ENCODE measurements at regions of chr13 and their contacts with region 1.

Region 1: GRCh38 chr13:20197361-20197834 is 4.7 kb upstream of the GJB2 start:
- DNase-seq: peak in 4 of 9 experiments; percentile 24 to 71 (median 46)
- ATAC-seq: peak; percentile 76
- H3K4me3 ChIP-seq: no peak overlapping the region
- H3K4me3 Mint-ChIP-seq: no peak overlapping the region
- H3K27ac ChIP-seq: no peak overlapping the region
- H3K27ac Mint-ChIP-seq: no peak overlapping the region
- H3K4me1 ChIP-seq: peaks cover 16% of the 10 kb centered on the region
- H3K4me1 Mint-ChIP-seq: peaks cover 18% of the 10 kb centered on the region
- H3K27me3 ChIP-seq: peaks cover 21 to 38% of the 10 kb centered on the region in 2 experiments
- H3K27me3 Mint-ChIP-seq: peaks cover 42% of the 10 kb centered on the region
- CTCF ChIP-seq: peak; percentile 78

Region 2: DNA sequence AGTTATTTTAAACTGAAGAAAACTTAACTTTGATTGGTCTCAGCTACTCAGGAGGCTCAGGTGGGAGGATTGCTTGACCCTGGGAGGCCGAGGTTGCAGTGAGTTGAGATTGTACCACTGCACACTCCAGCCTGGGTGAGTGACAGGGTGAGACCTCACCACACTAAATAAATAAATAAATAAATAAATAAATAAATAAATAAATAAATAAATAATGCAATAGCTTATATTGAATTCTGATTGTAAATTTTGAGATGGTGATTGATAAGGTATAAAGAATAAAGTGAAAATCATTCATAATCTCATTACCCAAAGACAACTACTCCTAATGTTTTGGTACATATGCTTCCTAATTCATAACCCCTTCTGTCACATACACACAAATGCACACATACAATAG is 1073.9 kb before region 1 on chr13:
- CTCF ChIA-PET with region 1: no interaction called
- POLR2A ChIA-PET with region 1: no interaction called
- intact Hi-C with region 1: no loop called
- DNase-seq: no peak
- ATAC-seq: no peak
- H3K4me3 ChIP-seq: no peak overlapping the region
- H3K4me3 Mint-ChIP-seq: no peak overlapping the region
- H3K27ac ChIP-seq: no peak overlapping the region
- H3K27ac Mint-ChIP-seq: no peak overlapping the region
- H3K4me1 ChIP-seq: no peaks in the 10 kb centered on the region
- H3K4me1 Mint-ChIP-seq: no peaks in the 10 kb centered on the region
- H3K27me3 ChIP-seq: no peaks in the 10 kb centered on the region
- H3K27me3 Mint-ChIP-seq: no peaks in the 10 kb centered on the region
- CTCF ChIP-seq: no peak

Region 3: DNA sequence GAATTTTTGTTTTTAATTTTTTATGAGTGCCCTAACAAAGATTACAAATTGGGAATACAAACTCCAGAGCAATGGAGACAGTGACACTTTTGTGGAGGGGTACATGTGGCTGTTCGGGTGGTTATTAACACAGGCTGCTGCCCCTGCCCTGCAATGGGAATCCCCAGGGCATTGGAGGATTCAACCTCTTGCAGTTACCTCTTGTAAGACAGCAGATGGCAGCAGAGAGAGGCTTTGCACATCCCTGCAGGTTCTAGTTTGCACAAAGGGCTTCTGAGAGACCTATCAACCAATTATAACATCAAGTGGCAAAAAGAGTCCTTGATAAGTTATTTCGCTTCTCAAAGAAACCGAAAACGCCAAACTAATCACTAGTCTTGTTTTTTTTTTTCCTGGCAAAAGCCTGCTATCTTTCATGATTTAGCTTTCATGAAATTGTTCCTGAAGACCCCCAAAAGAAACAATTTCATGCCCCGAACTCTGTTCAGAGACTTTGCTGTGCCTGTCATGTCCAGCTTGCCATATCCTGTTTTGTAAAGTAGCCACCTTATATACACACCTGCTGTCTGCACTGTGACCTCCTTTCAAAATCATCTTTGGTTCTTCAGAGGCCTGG is 15.1 kb before region 1 on chr13:
- CTCF ChIA-PET with region 1: interaction called, 17 read pairs
- POLR2A ChIA-PET with region 1: no interaction called
- intact Hi-C with region 1: no loop called
- DNase-seq: peak in 8 of 9 experiments; percentile 12 to 84 (median 54)
- ATAC-seq: peak; percentile 100
- H3K4me3 ChIP-seq: no peak overlapping the region
- H3K4me3 Mint-ChIP-seq: no peak overlapping the region
- H3K27ac ChIP-seq: no peak overlapping the region
- H3K27ac Mint-ChIP-seq: no peak overlapping the region
- H3K4me1 ChIP-seq: no peaks in the 10 kb centered on the region
- H3K4me1 Mint-ChIP-seq: peaks cover 3% of the 10 kb centered on the region
- H3K27me3 ChIP-seq: no peaks in the 10 kb centered on the region
- H3K27me3 Mint-ChIP-seq: peaks cover 42% of the 10 kb centered on the region
- CTCF ChIP-seq: peak; percentile 62

Region 4: DNA sequence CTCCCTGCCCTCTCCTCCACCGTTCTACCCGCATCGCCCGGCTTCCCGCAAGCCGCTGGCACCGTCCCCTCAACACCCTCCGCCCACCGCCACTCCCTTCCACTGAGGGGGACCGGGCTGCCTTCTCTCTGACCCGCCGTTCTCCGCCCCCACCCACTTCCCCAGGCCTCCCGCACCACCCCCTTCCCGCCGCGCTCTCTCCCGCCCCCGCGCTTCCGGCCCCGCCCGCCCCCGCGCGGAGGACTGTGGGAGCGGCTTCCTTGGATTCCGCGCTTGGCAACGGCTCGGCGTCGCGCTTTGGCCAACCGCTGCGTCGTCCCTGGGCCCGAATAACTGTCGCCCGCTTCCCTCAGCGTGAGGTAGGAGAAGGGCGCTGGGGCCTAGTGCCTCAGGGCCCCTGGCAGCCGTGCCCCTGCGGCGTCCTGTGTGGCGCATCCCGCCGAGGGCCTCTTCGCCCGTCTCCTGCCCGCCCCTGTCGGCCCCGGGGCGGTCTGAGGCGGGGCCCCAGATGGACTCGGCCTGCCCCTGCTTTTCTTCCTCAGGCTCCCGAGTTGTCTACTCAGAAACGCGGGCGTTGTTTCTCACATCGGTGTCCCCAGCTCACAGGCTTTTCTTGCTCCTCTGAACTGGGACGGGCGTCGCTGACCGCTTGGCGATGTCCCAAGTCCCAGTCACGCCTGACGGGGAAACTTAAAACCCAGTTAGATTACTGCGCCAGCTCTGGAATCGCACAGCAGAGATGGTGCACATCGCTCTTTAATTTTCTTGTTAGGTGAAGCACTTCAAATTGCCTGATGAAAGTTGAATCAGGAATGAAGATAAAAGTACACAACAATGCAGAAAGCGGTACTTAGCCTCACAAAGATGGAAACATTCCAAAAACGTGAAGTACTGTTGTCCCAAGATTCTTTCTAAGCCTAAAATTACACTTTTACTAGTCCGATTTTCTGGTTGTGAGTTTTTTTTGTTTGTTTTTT is 369.8 kb after region 1 on chr13 and contains the start of gene IFT88:
- CTCF ChIA-PET with region 1: no interaction called
- POLR2A ChIA-PET with region 1: no interaction called
- intact Hi-C with region 1: no loop called
- DNase-seq: peak; percentile 49 to 90 (median 80)
- ATAC-seq: peak; percentile 86
- H3K4me3 ChIP-seq: peak within 1 kb of the TSS; percentile 70 to 71
- H3K4me3 Mint-ChIP-seq: peak within 1 kb of the TSS; percentile 87
- H3K27ac ChIP-seq: peak within 1 kb of the TSS; percentile 70 to 77
- H3K27ac Mint-ChIP-seq: peak within 1 kb of the TSS; percentile 89
- H3K4me1 ChIP-seq: no peaks in the 10 kb centered on the region
- H3K4me1 Mint-ChIP-seq: peaks cover 17% of the 10 kb centered on the region
- H3K27me3 ChIP-seq: no peaks in the 10 kb centered on the region
- H3K27me3 Mint-ChIP-seq: no peaks in the 10 kb centered on the region
- CTCF ChIP-seq: no peak
- total RNA-seq, gene IFT88: 7.5 to 8.2 TPM